Endothelial cell of umbilical vein (primary cell): ENCODE measurements at regions of chr7 and their contacts with region 1.

Region 1: GRCh38 chr7:16098585-16099179 is 322.7 kb downstream of the CRPPA start:
- DNase-seq: peak; percentile 85
- H3K4me3 ChIP-seq: no peak overlapping the region
- H3K27ac ChIP-seq: peak overlapping the region; percentile 86
- H3K4me1 ChIP-seq: peaks cover 22% of the 10 kb centered on the region
- H3K27me3 ChIP-seq: no peaks in the 10 kb centered on the region
- CTCF ChIP-seq: peak; percentile 64 to 70
- POLR2A ChIP-seq: no peak

Region 2: GRCh38 chr7:15305002-15305600 is 793.6 kb before region 1 on chr7:
- CTCF ChIA-PET with region 1: interaction called, 4 read pairs
- POLR2A ChIA-PET with region 1: no interaction called
- dilution Hi-C with region 1: no loop called
- intact Hi-C with region 1: loop called (anchors 1 kb)
- DNase-seq: peak; percentile 65
- H3K4me3 ChIP-seq: no peak overlapping the region
- H3K27ac ChIP-seq: no peak overlapping the region
- H3K4me1 ChIP-seq: no peaks in the 10 kb centered on the region
- H3K27me3 ChIP-seq: no peaks in the 10 kb centered on the region
- CTCF ChIP-seq: peak; percentile 61 to 66
- POLR2A ChIP-seq: no peak

Region 3: GRCh38 chr7:15326044-15326644 is 772.5 kb before region 1 on chr7:
- CTCF ChIA-PET with region 1: interaction called, 9 read pairs
- POLR2A ChIA-PET with region 1: no interaction called
- dilution Hi-C with region 1: no loop called
- intact Hi-C with region 1: loop called (anchors 1 kb)
- DNase-seq: peak; percentile 72
- H3K4me3 ChIP-seq: no peak overlapping the region
- H3K27ac ChIP-seq: no peak overlapping the region
- H3K4me1 ChIP-seq: no peaks in the 10 kb centered on the region
- H3K27me3 ChIP-seq: no peaks in the 10 kb centered on the region
- CTCF ChIP-seq: peak; percentile 33 to 45
- POLR2A ChIP-seq: no peak

Region 4: GRCh38 chr7:16078076-16078952 is 20.4 kb before region 1 on chr7:
- CTCF ChIA-PET with region 1: interaction called, 126 read pairs
- POLR2A ChIA-PET with region 1: interaction called, 4 read pairs
- dilution Hi-C with region 1: no loop called
- intact Hi-C with region 1: loop called (anchors 1 kb)
- DNase-seq: peak; percentile 84
- H3K4me3 ChIP-seq: no peak overlapping the region
- H3K27ac ChIP-seq: peak overlapping the region; percentile 49
- H3K4me1 ChIP-seq: peaks cover 7% of the 10 kb centered on the region
- H3K27me3 ChIP-seq: no peaks in the 10 kb centered on the region
- CTCF ChIP-seq: peak; percentile 54 to 60
- POLR2A ChIP-seq: no peak

Region 5: DNA sequence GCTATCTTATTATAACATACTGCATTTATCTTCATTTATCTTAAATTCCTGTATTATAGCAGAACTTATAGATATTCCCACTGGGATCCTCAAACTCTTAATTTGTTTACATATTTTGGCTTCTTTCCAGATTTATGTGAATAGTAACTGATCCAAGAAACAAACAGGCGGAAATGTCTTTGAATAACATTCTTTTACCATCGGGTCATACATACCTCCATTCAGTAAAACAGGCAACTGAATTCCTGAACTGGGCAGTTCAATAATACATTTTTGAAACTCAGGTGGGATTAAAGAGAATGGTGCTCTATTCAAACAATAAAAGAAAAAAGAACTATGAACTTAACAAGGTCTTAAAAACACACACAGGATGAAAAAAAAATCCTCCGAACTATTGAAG is 14.8 kb before region 1 on chr7:
- CTCF ChIA-PET with region 1: interaction called, 126 read pairs
- POLR2A ChIA-PET with region 1: interaction called, 5 read pairs
- dilution Hi-C with region 1: no loop called
- intact Hi-C with region 1: loop called (anchors 1 kb)
- DNase-seq: peak; percentile 85
- H3K4me3 ChIP-seq: no peak overlapping the region
- H3K27ac ChIP-seq: peak overlapping the region; percentile 84
- H3K4me1 ChIP-seq: peaks cover 42% of the 10 kb centered on the region
- H3K27me3 ChIP-seq: no peaks in the 10 kb centered on the region
- CTCF ChIP-seq: no peak
- POLR2A ChIP-seq: no peak